H1 (cell line): ENCODE measurements at regions of chr5 and their contacts with region 1.

Region 1: DNA sequence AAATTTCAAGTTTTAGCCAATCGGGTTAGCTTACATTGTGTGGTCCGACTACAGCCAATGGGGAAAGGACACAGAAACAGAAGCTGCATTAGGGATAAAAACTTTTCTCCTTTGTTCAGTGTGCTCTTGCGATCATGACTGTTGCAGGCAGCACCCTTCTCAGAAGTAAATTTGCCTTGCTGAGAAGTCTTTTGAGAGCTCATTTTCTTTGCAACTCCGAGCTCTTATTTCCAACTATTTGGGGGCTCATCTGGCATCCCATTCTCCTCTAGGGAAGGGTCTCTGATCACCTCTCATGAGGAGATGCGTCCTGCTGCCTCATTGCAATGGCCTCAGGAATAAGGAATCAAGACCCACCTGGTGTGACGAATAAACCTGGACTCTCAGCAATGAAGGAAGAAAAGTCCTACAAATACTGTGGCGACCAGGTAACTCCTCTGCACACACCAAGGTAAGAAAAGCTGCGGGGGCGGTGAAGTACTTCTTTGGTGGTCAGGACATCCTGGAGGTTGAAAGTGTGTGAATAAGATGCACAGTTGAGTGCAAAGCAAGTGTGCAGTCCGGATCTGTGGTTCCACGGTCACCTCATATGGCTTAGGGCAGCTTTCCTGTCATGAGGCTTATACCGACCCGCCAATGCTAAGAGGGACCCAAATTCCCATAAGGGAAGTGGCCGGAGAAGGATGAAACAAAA is 20.4 kb downstream of the CNOT8 start:
- DNase-seq: no peak
- H3K4me3 ChIP-seq: no peak overlapping the region
- H3K27ac ChIP-seq: no peak overlapping the region
- H3K4me1 ChIP-seq: no peaks in the 10 kb centered on the region
- H3K27me3 ChIP-seq: no peaks in the 10 kb centered on the region
- CTCF ChIP-seq: no peak
- EP300 ChIP-seq: no peak
- POLR2A ChIP-seq: no peak
- RAD21 ChIP-seq: no peak

Region 2: DNA sequence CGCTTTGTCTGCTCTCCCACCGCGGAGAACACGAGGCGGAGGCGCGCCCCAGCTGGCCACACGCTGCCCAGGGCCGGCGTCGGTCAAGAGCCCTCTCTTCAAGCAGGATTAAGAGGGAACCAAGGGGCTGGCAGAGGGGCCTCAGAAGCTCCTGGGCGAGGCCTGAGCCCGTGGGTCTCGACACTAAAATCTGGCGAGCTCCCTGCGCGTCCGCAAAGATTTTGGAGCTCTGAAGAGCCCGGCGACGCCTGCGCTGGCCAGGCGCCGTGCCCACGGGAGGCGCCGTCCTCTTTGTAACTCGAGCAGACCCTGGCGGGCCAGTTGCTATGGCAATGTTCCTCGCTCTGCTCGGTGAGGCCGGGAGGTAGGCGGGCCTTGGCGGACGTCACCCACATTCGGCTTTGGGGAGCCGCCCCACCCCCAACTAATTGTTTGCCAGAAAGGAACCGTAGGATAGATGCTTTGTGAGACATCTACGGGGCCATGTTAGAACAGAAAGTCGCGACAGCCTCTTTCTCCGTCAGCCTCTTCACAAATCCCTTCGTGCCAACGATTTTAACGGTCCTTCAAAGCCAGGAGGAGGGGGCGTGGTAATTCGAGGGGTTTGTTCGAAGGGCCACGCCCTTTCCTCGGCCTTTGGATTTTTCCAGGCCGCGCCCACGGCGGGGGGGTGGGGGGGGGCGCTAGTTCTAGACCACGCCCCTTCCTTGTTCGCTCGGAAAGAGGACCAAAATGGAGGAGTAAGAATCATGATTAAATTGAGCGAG is 21.1 kb before region 1 on chr5:
- CTCF ChIA-PET with region 1: interaction called, 3 read pairs
- POLR2A ChIA-PET with region 1: interaction called, 21 read pairs
- DNase-seq: peak; percentile 79 to 93
- H3K4me3 ChIP-seq: peak overlapping the region; percentile 55 to 98 (median 72)
- H3K27ac ChIP-seq: peak overlapping the region; percentile 98
- H3K4me1 ChIP-seq: peaks cover 0 to 9% (median 5%) of the 10 kb centered on the region in 4 experiments; a peak in 6 of 7 replicates
- H3K27me3 ChIP-seq: no peaks in the 10 kb centered on the region
- CTCF ChIP-seq: no peak
- EP300 ChIP-seq: no peak
- POLR2A ChIP-seq: peak; percentile 67 to 86
- RAD21 ChIP-seq: no peak

Region 3: DNA sequence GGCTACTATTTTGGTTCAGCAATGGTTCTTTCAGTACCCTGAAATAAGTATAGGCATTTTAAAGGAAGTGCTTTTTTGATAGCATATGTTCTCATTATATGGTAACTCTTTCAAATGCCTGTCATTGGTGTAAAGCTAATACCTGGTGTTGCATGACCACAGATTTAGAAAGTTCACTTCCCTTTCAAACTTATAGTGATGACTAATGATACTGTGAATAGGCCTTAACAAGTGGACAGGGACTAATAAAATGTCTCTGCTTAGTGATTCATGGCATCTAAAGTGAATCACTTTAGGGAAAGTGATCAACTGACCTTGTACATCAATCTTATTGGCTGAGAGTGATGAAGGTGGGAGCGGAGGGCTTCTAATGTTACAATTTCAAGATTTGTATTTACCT is 83.7 kb after region 1 on chr5:
- CTCF ChIA-PET with region 1: no interaction called
- POLR2A ChIA-PET with region 1: no interaction called
- DNase-seq: no peak
- H3K4me3 ChIP-seq: no peak overlapping the region
- H3K27ac ChIP-seq: no peak overlapping the region
- H3K4me1 ChIP-seq: no peaks in the 10 kb centered on the region
- H3K27me3 ChIP-seq: no peaks in the 10 kb centered on the region
- CTCF ChIP-seq: no peak
- EP300 ChIP-seq: no peak
- POLR2A ChIP-seq: no peak
- RAD21 ChIP-seq: no peak

Region 4: DNA sequence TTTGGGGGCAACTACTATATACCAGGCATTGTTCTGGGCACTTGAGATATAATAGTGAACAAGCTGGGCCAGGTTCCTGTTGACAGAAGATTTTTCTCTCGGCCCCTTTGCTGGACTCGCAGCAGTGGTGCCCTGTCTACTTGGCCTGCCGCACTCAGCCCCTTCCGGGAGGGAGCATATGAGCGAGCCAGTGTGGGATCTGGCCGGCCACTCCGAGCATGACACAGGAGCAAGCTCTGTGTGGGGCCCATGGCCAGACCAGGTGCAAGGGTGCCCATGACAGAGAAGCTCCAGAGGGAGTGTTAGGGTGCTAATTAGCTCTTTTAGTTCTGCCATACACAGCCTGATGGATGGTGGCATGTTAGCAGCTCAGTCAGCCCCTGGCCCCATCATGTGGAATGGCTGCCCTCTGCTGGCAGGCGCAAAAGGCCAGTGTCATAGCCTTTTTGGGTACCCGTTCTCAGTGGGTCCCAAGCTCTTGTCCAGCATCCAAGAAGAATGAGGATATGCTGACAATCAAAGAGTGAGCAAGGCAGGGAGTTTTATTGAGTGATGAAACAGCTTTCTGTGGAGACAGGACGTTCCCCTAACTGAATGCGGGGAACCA is 125.5 kb after region 1 on chr5:
- CTCF ChIA-PET with region 1: no interaction called
- POLR2A ChIA-PET with region 1: no interaction called
- DNase-seq: peak in 1 of 2 experiments; percentile 80
- H3K4me3 ChIP-seq: no peak overlapping the region
- H3K27ac ChIP-seq: no peak overlapping the region
- H3K4me1 ChIP-seq: peaks cover 0 to 1% (median under 1%) of the 10 kb centered on the region in 4 experiments; a peak in 3 of 7 replicates
- H3K27me3 ChIP-seq: no peaks in the 10 kb centered on the region
- CTCF ChIP-seq: peak; percentile 84 to 93 (median 91)
- EP300 ChIP-seq: no peak
- POLR2A ChIP-seq: no peak
- RAD21 ChIP-seq: peak; percentile 86 to 88